IMR-90 (cell line): ENCODE measurements at regions of chr20 and their contacts with region 1.

Region 1: GRCh38 chr20:1934721-1935573 is 39.7 kb downstream of the SIRPA start:
- DNase-seq: peak; percentile 78
- ATAC-seq: peak; percentile 86
- H3K4me3 ChIP-seq: no peak overlapping the region
- H3K27ac ChIP-seq: no peak overlapping the region; the same call in 1 of the 2 replicates
- H3K4me1 ChIP-seq: peaks cover 14% of the 10 kb centered on the region
- H3K27me3 ChIP-seq: no peaks in the 10 kb centered on the region
- CTCF ChIP-seq: no peak
- POLR2A ChIP-seq: no peak
- RAD21 ChIP-seq: no peak

Region 2: DNA sequence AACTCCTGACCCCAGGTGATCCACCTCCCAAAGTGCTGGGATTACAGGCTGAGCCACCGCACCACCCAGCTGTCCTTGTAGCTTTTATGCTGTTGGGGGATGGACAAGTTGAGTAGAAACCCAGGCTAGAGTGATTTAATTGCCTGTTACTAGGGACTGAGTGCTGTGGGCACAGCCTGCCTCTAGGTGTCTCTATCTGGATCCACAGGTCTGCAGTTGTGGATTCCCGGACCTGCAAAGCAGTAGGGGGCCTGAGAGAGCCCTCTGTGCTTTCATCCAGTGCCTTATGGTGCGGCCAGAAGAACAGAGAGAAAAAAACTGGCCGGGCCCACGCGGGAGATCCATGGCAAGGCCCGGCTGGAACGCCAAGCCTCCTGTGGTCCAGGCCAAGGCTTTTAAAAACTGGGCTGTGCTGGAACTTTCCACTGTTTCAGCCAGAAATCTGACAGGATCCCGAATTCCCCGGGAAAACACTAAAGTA is 34.6 kb before region 1 on chr20:
- CTCF ChIA-PET with region 1: no interaction called
- POLR2A ChIA-PET with region 1: no interaction called
- dilution Hi-C with region 1: no loop called
- in situ Hi-C with region 1: no loop called
- intact Hi-C with region 1: loop called (anchors 2 kb)
- DNase-seq: peak; percentile 80
- ATAC-seq: peak; percentile 90
- H3K4me3 ChIP-seq: no peak overlapping the region
- H3K27ac ChIP-seq: no peak overlapping the region
- H3K4me1 ChIP-seq: peaks cover 16% of the 10 kb centered on the region
- H3K27me3 ChIP-seq: no peaks in the 10 kb centered on the region
- CTCF ChIP-seq: peak; percentile 87
- POLR2A ChIP-seq: no peak
- RAD21 ChIP-seq: peak; percentile 64